OCI-LY7 (cell line): ENCODE measurements at regions of chr10 and their contacts with region 1.

Region 1: DNA sequence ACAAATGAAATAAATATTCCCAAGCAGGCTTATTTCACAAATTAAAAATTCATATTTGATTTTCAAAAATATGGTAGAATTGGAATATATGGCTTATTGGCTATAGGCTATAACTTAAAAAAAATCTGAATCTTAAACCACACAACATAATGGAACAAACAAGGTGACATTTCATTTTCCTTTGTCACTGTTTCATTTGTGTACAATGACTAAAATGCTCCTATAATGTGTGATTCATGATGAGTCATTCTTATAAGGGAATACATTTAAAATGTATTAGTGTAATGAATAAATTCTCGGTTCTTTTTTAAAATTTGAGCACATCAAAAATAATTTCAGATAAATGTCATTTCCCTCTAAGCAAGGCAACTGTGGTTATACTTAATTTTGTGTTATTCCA is 148.0 kb upstream of the ANK3 start:
- DNase-seq: no peak
- H3K4me3 ChIP-seq: no peak overlapping the region
- H3K27ac ChIP-seq: no peak overlapping the region
- H3K4me1 ChIP-seq: no peaks in the 10 kb centered on the region
- CTCF ChIP-seq: no peak

Region 2: DNA sequence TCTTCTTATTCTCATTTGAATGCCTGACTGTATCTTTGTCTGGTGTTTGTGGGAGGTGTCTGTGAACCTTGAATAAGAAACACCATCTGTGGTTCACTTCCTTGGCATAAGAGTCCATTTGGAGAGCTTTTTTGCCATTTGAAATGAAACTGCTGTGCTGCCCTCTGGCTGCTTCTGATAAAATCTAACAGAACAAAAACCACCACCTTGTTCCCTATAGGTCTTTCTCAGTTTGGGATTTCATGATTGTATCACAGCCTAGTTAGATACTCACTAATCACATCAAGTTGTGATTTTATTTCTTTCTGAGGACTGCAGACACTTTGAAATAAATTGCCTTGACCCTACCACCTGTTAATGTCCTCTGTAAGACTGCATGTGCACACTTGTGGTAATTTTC is 1072.6 kb before region 1 on chr10:
- CTCF ChIA-PET with region 1: no interaction called
- POLR2A ChIA-PET with region 1: no interaction called
- intact Hi-C with region 1: no loop called
- DNase-seq: no peak
- H3K4me3 ChIP-seq: no peak overlapping the region
- H3K27ac ChIP-seq: no peak overlapping the region
- H3K4me1 ChIP-seq: no peaks in the 10 kb centered on the region
- CTCF ChIP-seq: no peak

Region 3: GRCh38 chr10:60521974-60522405 is 15.7 kb before region 1 on chr10:
- CTCF ChIA-PET with region 1: no interaction called
- POLR2A ChIA-PET with region 1: no interaction called
- intact Hi-C with region 1: no loop called
- DNase-seq: no peak
- H3K4me3 ChIP-seq: no peak overlapping the region
- H3K27ac ChIP-seq: no peak overlapping the region
- H3K4me1 ChIP-seq: no peaks in the 10 kb centered on the region
- CTCF ChIP-seq: no peak

Region 4: DNA sequence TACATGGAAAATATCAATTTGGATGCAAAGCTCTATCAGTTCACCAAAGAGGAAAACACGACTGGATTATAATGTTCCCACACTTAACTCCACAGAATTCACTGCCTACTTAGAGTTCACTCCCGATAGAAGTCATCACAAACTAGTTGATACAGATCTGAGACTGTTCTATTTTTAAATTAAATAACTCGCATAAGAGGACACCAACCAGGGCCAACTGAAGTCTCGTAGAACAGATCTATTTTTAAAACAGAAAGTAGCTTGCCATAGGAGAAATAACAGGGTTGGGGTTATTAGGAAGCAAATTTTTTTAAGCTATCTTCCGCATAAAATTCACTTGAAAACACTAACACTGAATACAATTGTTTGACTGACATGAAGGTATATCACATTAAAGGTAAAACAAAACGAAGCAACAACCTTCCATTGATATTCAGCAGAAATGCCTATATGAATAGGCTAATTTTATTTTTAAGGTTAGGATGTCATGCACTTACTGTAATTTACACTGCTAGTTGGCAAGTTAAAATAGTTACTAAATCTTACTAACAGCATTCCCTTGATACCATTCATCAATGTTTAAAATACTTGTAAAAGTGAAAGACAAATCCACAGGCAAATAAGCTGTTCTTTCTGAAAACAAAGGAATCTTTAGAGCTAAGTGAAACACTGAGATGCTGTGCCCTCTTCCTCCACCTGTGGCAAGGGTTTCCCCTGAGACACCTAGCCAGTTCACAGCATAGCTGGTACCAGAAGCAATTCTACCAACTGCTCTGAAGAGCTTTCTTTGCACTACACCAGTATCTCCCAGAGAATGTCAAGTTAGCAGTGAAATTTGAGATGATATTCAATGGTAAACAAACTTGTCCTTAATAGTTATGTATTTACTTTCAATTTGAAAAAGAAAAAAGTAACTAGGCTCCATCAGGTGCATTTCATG is 38.7 kb after region 1 on chr10:
- CTCF ChIA-PET with region 1: no interaction called
- POLR2A ChIA-PET with region 1: no interaction called
- intact Hi-C with region 1: loop called (anchors 1 kb)
- DNase-seq: no peak
- H3K4me3 ChIP-seq: no peak overlapping the region
- H3K27ac ChIP-seq: no peak overlapping the region
- H3K4me1 ChIP-seq: no peaks in the 10 kb centered on the region
- CTCF ChIP-seq: no peak